ENCODE measurements at regions of chr6 and their contacts with region 1.

Region 1: DNA sequence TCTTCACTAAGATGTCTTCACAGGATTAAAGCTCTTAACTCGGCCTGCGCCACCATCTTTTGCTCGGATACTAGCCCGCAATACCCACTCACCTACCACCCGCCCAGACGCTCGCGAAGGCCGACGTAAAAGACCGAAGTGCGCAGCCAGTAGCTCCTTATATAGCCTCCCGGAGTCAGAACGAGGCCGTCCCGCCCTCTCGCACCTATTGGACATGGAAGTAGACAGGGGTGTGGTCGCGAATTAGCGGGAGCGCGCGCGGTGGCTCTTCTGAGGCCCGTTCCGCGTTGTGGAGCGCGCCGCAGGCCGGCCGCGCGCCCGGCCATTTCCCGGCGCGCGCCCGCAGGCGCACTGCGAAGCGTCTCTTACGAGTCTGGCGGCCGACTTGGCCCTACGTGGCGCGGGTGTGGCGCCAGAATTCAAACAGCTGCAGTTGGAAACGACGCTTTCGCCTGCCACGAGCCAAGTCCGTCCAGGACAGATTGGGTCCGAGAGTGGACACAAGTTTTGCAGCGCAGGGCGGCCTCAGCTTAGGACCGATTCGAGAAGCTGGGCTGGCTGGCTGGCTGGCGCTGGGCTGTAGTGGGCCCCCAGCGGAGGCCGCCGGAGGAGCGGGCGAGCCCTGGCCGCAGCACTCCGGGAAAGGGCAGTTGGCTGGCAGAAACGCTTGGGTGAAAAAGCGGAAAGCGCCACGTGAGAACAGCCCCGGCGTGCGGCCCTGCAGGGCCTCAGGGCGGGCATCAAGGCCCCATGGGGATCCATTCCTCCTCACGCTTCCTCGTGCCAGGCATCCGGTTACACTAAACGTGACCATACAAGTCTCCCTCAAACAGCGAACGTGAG is 36.1 kb upstream of the SYNCRIP start:
- DNase-seq: peak; percentile 98 to 99 (median 99)
- ATAC-seq: peak; percentile 99
- H3K4me3 ChIP-seq: peak overlapping the region; percentile 90
- H3K27ac ChIP-seq: peak overlapping the region; percentile 97
- H3K4me1 ChIP-seq: no peaks in the 10 kb centered on the region
- H3K27me3 ChIP-seq: no peaks in the 10 kb centered on the region

Region 2: GRCh38 chr6:84667252-84668213 is 1011.3 kb before region 1 on chr6:
- intact Hi-C with region 1: no loop called
- DNase-seq: no peak
- ATAC-seq: no peak
- H3K4me3 ChIP-seq: no peak overlapping the region
- H3K27ac ChIP-seq: no peak overlapping the region
- H3K4me1 ChIP-seq: no peaks in the 10 kb centered on the region
- H3K27me3 ChIP-seq: no peaks in the 10 kb centered on the region

Region 3: GRCh38 chr6:85593438-85594196 is 85.2 kb before region 1 on chr6 and contains the start of gene SNX14:
- intact Hi-C with region 1: loop called in 2 of 4 experiments (anchors 5 kb)
- DNase-seq: peak; percentile 98 to 99 (median 98)
- ATAC-seq: peak; percentile 99
- H3K4me3 ChIP-seq: peak within 1 kb of the TSS; percentile 64
- H3K27ac ChIP-seq: peak within 1 kb of the TSS; percentile 92
- H3K4me1 ChIP-seq: peaks cover 3% of the 10 kb centered on the region
- H3K27me3 ChIP-seq: no peaks in the 10 kb centered on the region
- total RNA-seq, gene SNX14: 35.5 to 42.2 (median 39.9) TPM